ENCODE measurements at regions of chr11 and their contacts with region 1.

Region 1: GRCh38 chr11:43643898-43644620 is 36.5 kb upstream of the HSD17B12 start:
- DNase-seq: peak; percentile 95
- ATAC-seq: peak; percentile 99

Region 2: GRCh38 chr11:43311791-43312607 is 332.1 kb before region 1 on chr11 and contains the start of gene API5:
- intact Hi-C with region 1: loop called (anchors 5 kb)
- DNase-seq: peak; percentile 98
- ATAC-seq: peak; percentile 100
- total RNA-seq, gene API5: 38.2 TPM

Region 3: GRCh38 chr11:43579171-43579918 is 64.7 kb before region 1 on chr11:
- intact Hi-C with region 1: loop called (anchors 5 kb)
- DNase-seq: peak; percentile 58
- ATAC-seq: no peak

Region 4: GRCh38 chr11:43614214-43614613 is 29.8 kb before region 1 on chr11:
- intact Hi-C with region 1: no loop called
- DNase-seq: no peak
- ATAC-seq: no peak

Region 5: GRCh38 chr11:43680521-43681400 is 36.7 kb after region 1 on chr11 and contains the start of gene HSD17B12:
- intact Hi-C with region 1: loop called (anchors 5 kb)
- DNase-seq: peak; percentile 100
- ATAC-seq: peak; percentile 100
- total RNA-seq, gene HSD17B12: 61.2 TPM

Region 6: DNA sequence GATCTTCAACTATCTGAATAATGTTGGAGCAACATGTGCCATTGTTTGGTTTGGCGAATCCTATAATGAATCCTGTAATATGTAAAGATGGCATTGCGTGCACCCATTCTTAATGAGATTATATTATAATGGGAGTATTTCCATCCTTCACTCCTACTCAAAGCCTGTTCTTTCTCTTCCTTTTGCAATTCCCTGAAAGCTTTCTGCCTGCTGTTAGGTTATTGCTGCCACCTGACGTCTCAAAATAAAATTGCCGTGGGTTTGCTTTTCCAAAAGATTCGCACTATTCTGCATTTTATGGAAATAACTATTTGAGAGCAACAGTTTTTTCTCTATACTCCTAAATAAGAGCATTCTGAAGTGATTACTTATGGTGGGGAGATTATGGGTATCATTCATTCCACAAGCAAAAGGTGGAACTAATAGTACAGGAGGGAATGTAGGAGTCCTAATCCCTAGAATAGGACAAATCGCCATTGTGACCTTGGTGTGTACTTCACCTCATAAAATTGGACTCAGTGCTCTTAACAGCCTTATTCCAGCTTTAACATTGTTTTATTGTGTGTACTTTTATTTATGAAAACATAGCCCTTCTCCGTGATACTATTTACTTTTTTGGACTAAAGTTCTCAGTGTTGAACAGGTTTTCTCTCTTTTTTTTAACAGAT is 167.0 kb after region 1 on chr11:
- intact Hi-C with region 1: loop called (anchors 5 kb)
- DNase-seq: no peak
- ATAC-seq: no peak

Region 7: GRCh38 chr11:43895601-43896000 is 251.5 kb after region 1 on chr11:
- intact Hi-C with region 1: no loop called
- DNase-seq: no peak
- ATAC-seq: no peak